GM12878 (cell line): ENCODE measurements at regions of chr6 and their contacts with region 1.

Region 1: DNA sequence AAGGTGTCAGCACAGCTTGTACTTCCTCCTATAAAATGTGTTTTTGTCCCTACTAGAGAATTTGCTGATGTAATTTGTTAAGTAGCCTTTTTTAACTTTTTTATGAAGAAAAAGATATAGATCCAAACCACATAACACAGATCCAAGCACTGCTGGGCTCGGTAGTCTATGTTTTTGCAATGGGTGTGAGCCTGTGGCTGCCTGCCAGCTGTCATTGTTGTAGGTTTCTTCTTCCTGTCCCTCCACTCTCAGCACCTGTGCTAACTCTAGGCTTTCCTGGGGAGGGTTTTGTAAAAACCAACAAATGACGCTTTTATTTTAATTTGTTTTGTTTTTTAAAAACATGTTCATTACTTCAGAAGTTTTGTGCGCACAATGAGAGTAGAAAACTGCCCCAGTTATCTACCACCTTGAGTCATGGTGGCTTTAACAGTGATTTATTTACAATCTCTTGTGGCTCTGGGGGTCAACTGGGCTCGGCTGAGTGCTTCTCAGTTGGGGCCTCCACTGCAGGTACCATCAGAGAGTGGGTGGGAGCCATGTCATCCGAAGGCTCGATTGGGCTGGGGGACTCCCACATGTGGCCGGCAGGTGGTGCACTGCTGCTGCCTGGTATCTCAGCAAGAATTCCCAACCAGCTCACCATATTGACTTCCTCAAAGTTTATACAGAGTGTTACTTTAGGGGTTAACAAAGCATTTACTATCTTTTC is 3.1 kb upstream of the CCR6 start:
- DNase-seq: no peak
- ATAC-seq: no peak
- H3K4me3 ChIP-seq: no peak overlapping the region
- H3K27ac ChIP-seq: peak overlapping the region; percentile 66; the same call in 1 of the 2 replicates
- H3K4me1 ChIP-seq: peaks cover 69% of the 10 kb centered on the region
- H3K27me3 ChIP-seq: no peaks in the 10 kb centered on the region
- CTCF ChIP-seq: peak; percentile 18 to 58 (median 56); a peak in 5 of 6 replicates
- EP300 ChIP-seq: no peak
- POLR2A ChIP-seq: no peak
- RAD21 ChIP-seq: peak; percentile 30

Region 2: GRCh38 chr6:166956444-166957086 is 163.3 kb before region 1 on chr6 and contains the start of gene RNASET2:
- CTCF ChIA-PET with region 1: interaction called, 11 read pairs
- POLR2A ChIA-PET with region 1: interaction called, 6 read pairs
- RAD21 ChIA-PET with region 1: interaction called, 22 read pairs
- SMC1A ChIA-PET with region 1: interaction called, 19 read pairs
- in situ Hi-C with region 1: no loop called
- intact Hi-C with region 1: loop called (anchors 10 kb)
- DNase-seq: no peak
- ATAC-seq: peak; percentile 83
- H3K4me3 ChIP-seq: peak within 1 kb of the TSS; percentile 94
- H3K27ac ChIP-seq: peak within 1 kb of the TSS; percentile 94
- H3K4me1 ChIP-seq: peaks cover 49% of the 10 kb centered on the region
- H3K27me3 ChIP-seq: no peaks in the 10 kb centered on the region
- CTCF ChIP-seq: no peak
- EP300 ChIP-seq: no peak
- POLR2A ChIP-seq: peak; percentile 91
- RAD21 ChIP-seq: no peak
- polyA plus RNA-seq, gene RNASET2: 5.5 to 17.8 TPM

Region 3: DNA sequence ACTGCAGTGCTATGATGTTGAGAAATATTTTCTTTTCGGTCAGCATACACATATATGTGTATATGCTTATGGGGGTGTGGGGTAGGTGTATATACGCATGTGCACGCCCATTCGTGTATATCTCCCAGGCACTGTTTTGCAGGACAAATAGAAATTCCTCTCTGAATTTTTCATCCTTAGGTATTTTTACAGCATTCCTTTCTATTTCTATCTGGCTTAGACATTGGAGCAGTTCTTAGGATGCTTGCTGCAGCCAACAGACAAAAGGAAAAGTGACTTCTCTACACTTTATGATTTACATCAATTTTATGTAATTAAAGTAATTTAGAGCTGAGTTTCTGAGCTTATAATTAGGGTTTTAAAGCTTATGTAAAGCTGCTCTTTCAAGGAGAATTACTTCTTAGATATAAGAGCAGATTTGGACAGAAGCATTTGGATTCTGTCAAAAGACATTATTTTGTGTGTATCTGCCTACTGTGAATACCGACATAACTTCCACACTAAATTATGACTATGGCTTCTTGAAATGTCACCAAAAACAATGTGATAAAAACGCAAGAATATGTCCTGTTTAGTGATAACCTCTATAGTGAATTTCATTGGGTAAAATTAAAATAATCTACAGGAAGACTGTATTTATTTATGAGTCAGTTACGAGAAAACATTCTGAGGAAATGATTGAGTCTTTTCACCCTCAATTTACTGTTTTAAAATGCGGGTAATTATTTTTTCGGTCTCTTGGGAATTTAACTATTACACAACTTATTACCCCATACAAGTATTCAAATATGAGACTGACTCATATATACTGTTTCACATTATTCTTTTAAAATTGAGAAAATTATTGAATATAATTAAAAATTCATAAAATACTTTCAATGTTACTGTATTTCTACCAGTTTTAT is 142.0 kb before region 1 on chr6:
- CTCF ChIA-PET with region 1: no interaction called
- POLR2A ChIA-PET with region 1: no interaction called
- RAD21 ChIA-PET with region 1: no interaction called
- SMC1A ChIA-PET with region 1: no interaction called
- in situ Hi-C with region 1: no loop called
- intact Hi-C with region 1: no loop called
- DNase-seq: no peak
- ATAC-seq: no peak
- H3K4me3 ChIP-seq: no peak overlapping the region
- H3K27ac ChIP-seq: no peak overlapping the region
- H3K4me1 ChIP-seq: no peaks in the 10 kb centered on the region
- H3K27me3 ChIP-seq: no peaks in the 10 kb centered on the region
- CTCF ChIP-seq: no peak
- EP300 ChIP-seq: no peak
- POLR2A ChIP-seq: no peak
- RAD21 ChIP-seq: no peak

Region 4: GRCh38 chr6:167079853-167080297 is 40.0 kb before region 1 on chr6:
- CTCF ChIA-PET with region 1: interaction called, 5 read pairs
- POLR2A ChIA-PET with region 1: no interaction called
- RAD21 ChIA-PET with region 1: interaction called, 14 read pairs
- SMC1A ChIA-PET with region 1: interaction called, 9 read pairs
- in situ Hi-C with region 1: no loop called
- intact Hi-C with region 1: no loop called
- DNase-seq: peak; percentile 93
- ATAC-seq: peak; percentile 99
- H3K4me3 ChIP-seq: no peak overlapping the region
- H3K27ac ChIP-seq: peak overlapping the region; percentile 79
- H3K4me1 ChIP-seq: peaks cover 31% of the 10 kb centered on the region
- H3K27me3 ChIP-seq: no peaks in the 10 kb centered on the region
- CTCF ChIP-seq: peak; percentile 70 to 81 (median 74)
- EP300 ChIP-seq: peak; percentile 64 to 84; a peak in 2 of 4 replicates
- POLR2A ChIP-seq: no peak
- RAD21 ChIP-seq: peak; percentile 83

Region 5: GRCh38 chr6:167130008-167130677 is 10.3 kb after region 1 on chr6:
- CTCF ChIA-PET with region 1: interaction called, 52 read pairs
- POLR2A ChIA-PET with region 1: interaction called, 54 read pairs
- RAD21 ChIA-PET with region 1: interaction called, 120 read pairs
- SMC1A ChIA-PET with region 1: interaction called, 351 read pairs
- in situ Hi-C with region 1: no loop called
- intact Hi-C with region 1: no loop called
- DNase-seq: no peak
- ATAC-seq: peak; percentile 71
- H3K4me3 ChIP-seq: peak overlapping the region; percentile 1; the same call in 1 of the 2 replicates
- H3K27ac ChIP-seq: peak overlapping the region; percentile 47
- H3K4me1 ChIP-seq: peaks cover 21% of the 10 kb centered on the region
- H3K27me3 ChIP-seq: no peaks in the 10 kb centered on the region
- CTCF ChIP-seq: no peak
- EP300 ChIP-seq: no peak
- POLR2A ChIP-seq: no peak
- RAD21 ChIP-seq: no peak

Region 6: DNA sequence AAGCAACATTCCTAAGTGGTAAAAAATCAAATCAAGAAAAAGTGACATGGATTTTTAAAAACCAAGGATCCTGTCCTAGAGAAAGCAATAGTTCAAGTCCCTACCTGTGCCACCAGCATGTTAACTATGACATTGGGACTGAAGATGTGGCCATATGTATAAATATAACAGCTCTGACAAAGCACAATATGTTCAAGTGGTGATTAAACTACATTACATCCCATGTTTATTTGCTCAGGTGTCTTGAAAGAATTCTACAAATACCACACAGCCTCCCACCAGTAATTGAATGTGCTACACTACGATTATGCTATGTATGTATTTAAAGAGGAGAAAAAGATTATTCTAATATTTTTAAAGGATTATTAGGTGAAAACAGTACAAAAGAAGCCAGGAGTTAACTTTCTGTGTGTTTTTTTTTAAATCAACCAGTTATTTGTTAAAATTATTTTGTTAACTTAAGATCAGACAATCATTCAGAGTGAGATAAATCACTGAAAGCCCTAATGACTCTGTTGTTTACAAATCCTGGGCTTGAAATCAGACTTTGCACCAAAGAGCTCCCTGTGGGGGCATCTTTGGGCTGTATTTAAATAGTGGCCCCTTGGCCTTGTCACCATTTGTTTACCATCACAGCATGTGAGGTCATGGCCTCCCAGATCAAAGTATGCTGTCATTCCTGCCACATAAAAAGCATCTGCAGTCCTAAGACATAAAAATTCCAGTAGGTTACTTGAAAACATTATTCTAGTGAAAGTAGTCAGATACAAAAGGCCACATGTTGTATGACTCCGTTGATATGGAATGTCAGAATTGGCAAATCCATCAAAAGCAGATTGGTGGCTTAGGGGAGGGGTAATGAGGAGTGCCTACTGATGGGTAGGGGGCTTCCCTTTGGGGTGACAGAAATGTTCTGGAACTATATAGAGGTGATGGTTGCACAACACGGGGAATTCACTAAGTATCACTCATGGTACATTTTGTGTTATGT is 222.1 kb after region 1 on chr6:
- CTCF ChIA-PET with region 1: no interaction called
- POLR2A ChIA-PET with region 1: no interaction called
- RAD21 ChIA-PET with region 1: no interaction called
- SMC1A ChIA-PET with region 1: no interaction called
- in situ Hi-C with region 1: no loop called
- intact Hi-C with region 1: no loop called
- DNase-seq: no peak
- ATAC-seq: no peak
- H3K4me3 ChIP-seq: no peak overlapping the region
- H3K27ac ChIP-seq: no peak overlapping the region
- H3K4me1 ChIP-seq: no peaks in the 10 kb centered on the region
- H3K27me3 ChIP-seq: peaks cover 2% of the 10 kb centered on the region in 2 experiments; a peak in 1 of 4 replicates
- CTCF ChIP-seq: no peak
- EP300 ChIP-seq: no peak
- POLR2A ChIP-seq: no peak
- RAD21 ChIP-seq: no peak

Region 7: GRCh38 chr6:168756009-168756634 is 1636.3 kb after region 1 on chr6:
- CTCF ChIA-PET with region 1: no interaction called
- POLR2A ChIA-PET with region 1: no interaction called
- RAD21 ChIA-PET with region 1: no interaction called
- SMC1A ChIA-PET with region 1: no interaction called
- in situ Hi-C with region 1: no loop called
- intact Hi-C with region 1: no loop called
- DNase-seq: no peak
- ATAC-seq: no peak
- H3K4me3 ChIP-seq: no peak overlapping the region
- H3K27ac ChIP-seq: no peak overlapping the region
- H3K4me1 ChIP-seq: no peaks in the 10 kb centered on the region
- H3K27me3 ChIP-seq: no peaks in the 10 kb centered on the region
- CTCF ChIP-seq: no peak
- EP300 ChIP-seq: no peak
- POLR2A ChIP-seq: no peak
- RAD21 ChIP-seq: no peak